Right cardiac atrium (tissue), 5 donors: ENCODE measurements at regions of chr16 and their contacts with region 1.

Region 1: DNA sequence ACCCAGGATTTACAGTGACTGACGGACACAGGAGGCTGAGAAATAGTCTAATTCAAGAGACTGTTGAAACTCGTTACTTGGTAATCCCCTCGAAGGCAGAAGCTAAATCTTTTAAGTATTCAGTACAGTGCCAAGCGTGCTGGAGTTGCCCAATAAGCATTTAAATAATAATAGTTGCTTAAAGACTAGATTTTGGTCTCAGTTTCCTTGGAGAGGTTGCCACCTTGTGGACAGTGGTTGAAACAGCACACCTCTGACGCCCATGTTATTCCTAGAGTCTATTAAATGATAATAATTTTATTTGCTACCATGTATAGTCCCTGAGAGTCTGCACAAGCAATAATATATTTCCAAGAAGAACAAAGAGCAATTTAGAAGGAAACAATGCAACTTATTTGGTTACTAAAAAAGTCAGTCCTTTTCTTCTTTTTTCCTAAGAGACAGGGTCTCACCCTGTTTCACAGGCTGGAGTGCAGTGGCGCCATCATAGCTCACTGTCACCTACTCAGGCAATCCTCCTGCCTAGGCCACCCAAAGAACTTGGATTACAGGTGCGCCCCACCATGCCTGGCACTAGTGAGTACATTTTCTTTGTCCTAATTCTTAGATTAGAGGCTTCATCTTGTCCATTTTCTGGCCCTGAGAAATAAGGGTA is 138.0 kb upstream of the NUDT7 start:
- DNase-seq: peak in 2 of 3 donors; percentile 37 to 62
- ATAC-seq: peak in 1 of 2 donors; percentile 51
- H3K4me3 ChIP-seq: no peak overlapping the region
- H3K27ac ChIP-seq: no peak overlapping the region
- H3K4me1 ChIP-seq: no peaks in the 10 kb centered on the region
- H3K27me3 ChIP-seq: no peaks in the 10 kb centered on the region

Region 2: DNA sequence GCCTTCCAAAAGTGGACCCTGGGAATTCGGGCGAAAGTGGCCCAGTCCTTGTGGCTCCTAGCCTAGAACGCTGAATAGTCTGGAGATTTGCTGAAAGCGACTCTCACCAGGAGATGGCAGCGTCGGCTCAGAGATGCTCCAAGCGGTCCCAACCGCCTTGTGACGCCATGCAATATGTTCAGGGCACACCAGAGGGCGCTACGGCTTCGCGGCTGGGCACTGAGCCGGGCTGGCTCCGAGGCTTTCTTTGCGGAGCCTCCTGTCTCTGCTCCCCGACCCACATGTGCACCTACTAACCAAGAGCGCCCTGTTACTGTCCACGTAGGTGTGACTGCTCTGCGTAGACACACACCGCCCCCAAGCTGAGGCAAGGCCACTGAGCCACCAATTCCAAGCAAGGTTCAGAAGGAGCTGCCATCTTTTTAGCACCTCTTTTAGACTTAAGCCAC is 348.2 kb before region 1 on chr16:
- intact Hi-C with region 1: loop called (anchors 2 to 5 kb)
- DNase-seq: peak; percentile 85 to 93 (median 93)
- ATAC-seq: peak; percentile 97
- H3K4me3 ChIP-seq: peak overlapping the region; percentile 22
- H3K27ac ChIP-seq: no peak overlapping the region
- H3K4me1 ChIP-seq: peaks cover 2% of the 10 kb centered on the region
- H3K27me3 ChIP-seq: no peaks in the 10 kb centered on the region

Region 3: GRCh38 chr16:77437859-77438258 is 146.5 kb before region 1 on chr16:
- intact Hi-C with region 1: loop called in 1 of 4 experiments (anchors 10 kb)
- DNase-seq: no peak
- ATAC-seq: no peak
- H3K4me3 ChIP-seq: no peak overlapping the region
- H3K27ac ChIP-seq: no peak overlapping the region
- H3K4me1 ChIP-seq: no peaks in the 10 kb centered on the region
- H3K27me3 ChIP-seq: peaks cover 4% of the 10 kb centered on the region

Region 4: DNA sequence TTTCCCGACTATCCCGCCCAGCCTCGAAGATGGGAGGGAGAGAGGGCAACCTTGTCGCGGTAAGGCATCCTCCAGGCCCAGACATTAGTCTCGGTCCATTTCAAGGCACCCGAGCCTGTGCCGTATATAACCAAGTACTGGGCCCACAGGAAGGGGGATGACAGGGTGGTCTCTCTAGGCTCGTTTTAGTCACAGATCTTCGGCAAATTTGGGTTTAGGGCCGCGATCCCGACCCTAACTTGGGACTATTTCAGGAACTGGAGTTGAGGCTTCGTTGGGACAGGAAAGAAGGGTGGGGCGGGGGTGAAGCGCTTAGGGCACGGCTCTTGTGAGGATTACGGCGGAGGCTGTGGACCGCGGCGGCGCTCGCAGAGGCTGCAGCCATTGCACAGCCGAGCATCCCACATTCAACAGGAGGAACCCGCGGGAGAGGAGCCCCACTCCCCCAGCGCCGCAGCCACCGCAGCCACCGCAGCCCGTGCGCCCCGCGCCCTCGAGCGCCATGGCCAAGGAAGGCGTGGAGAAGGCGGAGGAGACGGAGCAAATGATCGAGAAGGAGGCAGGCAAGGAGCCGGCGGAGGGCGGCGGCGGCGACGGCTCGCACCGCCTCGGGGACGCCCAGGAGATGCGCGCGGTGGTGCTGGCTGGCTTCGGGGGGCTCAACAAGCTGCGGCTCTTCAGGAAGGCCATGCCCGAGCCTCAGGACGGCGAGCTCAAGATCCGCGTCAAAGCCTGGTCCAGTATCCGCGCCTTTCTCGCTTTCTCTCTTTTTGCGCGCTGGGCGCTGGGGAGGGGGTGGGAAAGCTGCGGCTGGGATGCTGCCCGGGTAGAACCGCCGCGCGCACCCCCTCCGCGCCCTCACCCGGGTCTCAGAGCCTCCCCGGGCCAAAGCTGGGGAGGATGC is 204.1 kb after region 1 on chr16 and contains the start of gene VAT1L:
- intact Hi-C with region 1: no loop called
- DNase-seq: peak; percentile 42 to 72 (median 68)
- ATAC-seq: peak; percentile 90 to 92
- H3K4me3 ChIP-seq: peak within 1 kb of the TSS; percentile 34
- H3K27ac ChIP-seq: no peak within 1 kb of the TSS
- H3K4me1 ChIP-seq: no peaks in the 10 kb centered on the region
- H3K27me3 ChIP-seq: no peaks in the 10 kb centered on the region
- total RNA-seq, gene VAT1L: 11.0 to 40.3 (median 16.3) TPM